ENCODE measurements at regions of chr12 and their contacts with region 1.

Region 1: DNA sequence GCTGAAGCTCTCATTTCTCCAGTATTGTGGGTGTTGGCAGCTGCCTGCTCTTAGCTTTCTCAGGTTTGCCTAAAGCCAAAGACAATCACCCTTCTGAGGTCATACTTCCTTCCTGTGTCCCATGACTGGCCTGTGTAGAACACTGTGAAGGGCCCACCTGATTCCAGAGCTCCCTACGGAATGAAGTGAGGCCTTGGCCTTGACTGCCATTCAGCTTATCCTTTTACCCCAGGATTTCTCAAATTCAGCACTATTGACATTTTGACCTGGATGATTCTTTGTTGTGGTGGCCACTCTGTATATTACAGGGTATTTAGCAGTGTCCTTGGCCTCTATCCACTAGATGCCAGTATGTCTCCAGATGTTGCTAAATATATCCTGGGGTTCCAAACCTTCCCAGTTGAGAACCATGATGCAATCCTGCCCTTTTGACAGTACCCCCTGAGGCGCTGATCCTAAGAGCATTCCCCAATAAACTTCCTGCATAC is 112.3 kb upstream of the KRR1 start:
- DNase-seq: no peak
- H3K4me3 ChIP-seq: no peak overlapping the region
- H3K27ac ChIP-seq: no peak overlapping the region
- H3K4me1 ChIP-seq: peaks cover 0 to 4% (median 0%) of the 10 kb centered on the region in 4 experiments; a peak in 1 of 7 replicates
- H3K27me3 ChIP-seq: no peaks in the 10 kb centered on the region
- CTCF ChIP-seq: peak in 2 of 3 experiments; percentile 67 to 85; a peak in 3 of 4 replicates
- EP300 ChIP-seq: no peak
- POLR2A ChIP-seq: no peak
- RAD21 ChIP-seq: peak; percentile 87 to 92

Region 2: GRCh38 chr12:75611041-75611440 is 12.6 kb before region 1 on chr12:
- CTCF ChIA-PET with region 1: interaction called, 17 read pairs
- POLR2A ChIA-PET with region 1: no interaction called
- DNase-seq: no peak
- H3K4me3 ChIP-seq: no peak overlapping the region
- H3K27ac ChIP-seq: no peak overlapping the region
- H3K4me1 ChIP-seq: no peaks in the 10 kb centered on the region
- H3K27me3 ChIP-seq: no peaks in the 10 kb centered on the region
- CTCF ChIP-seq: peak in 2 of 3 experiments; percentile 31 to 37; a peak in 3 of 4 replicates
- EP300 ChIP-seq: no peak
- POLR2A ChIP-seq: no peak
- RAD21 ChIP-seq: peak; percentile 29 to 42

Measured in H1 (cell line).